ENCODE measurements at regions of chr20 and their contacts with region 1.

Region 1: DNA sequence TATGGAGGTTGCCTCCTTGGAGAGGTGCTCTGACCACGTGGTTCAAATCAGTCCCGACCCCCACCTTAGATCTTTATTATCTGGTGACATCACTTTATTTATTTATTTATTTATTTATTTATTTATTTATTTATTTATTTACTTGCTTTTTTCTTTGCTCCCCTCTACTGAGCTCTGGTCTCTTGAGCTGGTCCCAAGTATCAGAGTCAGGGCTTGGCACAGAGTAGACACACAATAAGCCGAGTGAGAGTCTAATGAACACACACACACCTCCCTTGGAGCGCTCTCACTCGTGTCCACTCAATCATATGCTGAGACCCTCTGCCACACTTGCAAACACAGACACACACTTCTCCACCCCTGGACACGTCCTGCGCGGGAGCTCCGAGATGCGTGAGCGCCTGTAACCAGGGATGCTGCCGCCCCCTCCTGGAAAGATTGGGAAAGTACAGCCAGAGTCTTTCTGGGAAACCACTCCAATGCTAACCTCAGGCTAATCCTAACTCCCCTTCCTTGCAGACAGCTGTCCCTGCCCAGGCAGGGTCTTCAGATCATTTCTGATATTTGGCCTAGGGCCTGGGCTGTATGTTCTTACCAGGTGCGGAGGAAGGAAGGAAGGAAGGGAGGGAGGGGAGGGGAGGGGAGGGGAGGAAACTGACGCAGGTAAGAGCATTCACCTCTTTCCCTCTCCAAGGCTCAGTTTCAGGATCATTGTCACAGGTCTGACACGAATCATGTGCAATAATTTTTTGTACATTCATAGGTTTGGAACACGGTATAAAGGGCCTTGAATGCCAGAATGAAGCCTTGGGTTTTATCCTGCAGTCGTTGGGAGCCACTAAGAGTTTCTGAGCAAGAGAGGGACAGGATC is 70.9 kb downstream of the STK35 start:
- DNase-seq: peak; percentile 72 to 80 (median 73)
- ATAC-seq: peak; percentile 82
- H3K4me3 ChIP-seq: no peak overlapping the region
- H3K27ac ChIP-seq: no peak overlapping the region
- H3K4me1 ChIP-seq: no peaks in the 10 kb centered on the region
- H3K27me3 ChIP-seq: no peaks in the 10 kb centered on the region
- CTCF ChIP-seq: peak; percentile 68 to 89 (median 84)
- POLR2A ChIP-seq: no peak

Region 2: DNA sequence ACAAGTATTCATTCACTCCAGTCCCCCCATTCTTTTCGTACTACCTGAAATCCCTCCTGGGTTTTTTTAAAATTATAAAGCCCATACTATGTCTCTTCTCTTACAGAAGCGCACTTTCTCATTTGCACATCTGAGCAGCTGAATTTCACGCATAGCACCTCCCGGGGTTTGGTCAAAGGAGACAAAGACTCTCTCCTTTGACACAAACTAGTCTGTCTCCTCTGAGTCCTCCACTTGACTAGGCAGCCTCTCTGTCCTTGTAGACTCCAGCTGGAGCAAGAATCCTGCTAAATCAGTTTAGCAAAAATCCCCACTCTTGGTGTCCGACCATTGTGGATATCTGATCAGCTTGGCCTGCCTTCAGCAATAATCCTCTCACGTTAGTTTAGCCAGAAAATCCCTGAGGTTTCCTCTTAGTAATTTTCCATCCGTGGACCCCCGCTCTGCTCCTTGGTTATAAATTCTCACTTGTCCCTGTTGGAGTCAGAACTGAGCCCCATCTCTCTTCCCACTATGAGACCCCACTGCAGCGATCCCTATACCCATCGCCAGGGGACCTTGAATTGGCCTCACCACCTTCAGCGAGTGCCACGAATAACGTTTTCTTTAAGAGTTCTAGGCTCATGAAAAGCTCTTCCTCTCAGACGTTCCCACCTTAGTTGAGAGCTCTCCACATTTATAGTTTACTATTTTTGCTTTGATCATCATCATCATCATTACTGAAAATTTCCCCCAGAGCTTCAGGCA is 207.7 kb before region 1 on chr20:
- intact Hi-C with region 1: loop called (anchors 5 kb)
- DNase-seq: no peak
- ATAC-seq: no peak
- H3K4me3 ChIP-seq: no peak overlapping the region
- H3K27ac ChIP-seq: no peak overlapping the region
- H3K4me1 ChIP-seq: peaks cover 10% of the 10 kb centered on the region
- H3K27me3 ChIP-seq: no peaks in the 10 kb centered on the region
- CTCF ChIP-seq: no peak
- POLR2A ChIP-seq: no peak

Region 3: DNA sequence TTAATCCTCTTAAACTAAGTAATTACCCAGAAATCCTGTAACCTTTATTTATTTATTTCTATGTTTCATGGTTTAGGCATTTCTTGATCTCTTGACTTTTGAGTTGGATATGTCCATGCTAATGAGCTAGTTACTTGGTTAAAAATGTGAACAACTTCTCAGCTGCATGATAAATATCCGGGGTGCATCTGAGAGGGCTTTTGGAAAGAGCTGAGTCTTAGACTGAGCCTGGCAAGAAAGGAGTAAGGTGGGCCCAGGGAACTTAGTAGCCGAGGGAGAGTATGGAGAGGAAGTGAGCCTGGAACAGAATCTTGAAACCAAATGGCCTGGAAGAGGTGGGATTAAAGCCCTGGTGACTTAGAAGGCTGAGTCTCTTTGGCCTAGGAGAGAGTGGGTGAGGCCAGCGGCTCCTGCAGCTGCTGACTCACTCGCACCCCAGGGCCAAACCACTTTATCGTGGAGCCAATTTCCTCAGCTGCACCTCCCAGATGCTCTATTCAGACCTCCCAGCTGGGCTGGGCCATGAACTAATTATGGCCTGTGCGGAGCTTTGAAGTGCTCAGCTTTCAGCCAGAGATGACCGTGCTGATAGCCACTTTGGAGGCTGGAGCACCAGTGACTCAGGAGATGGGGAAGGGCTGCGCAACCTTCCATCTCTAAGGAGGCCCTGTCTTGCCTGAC is 142.4 kb after region 1 on chr20:
- intact Hi-C with region 1: no loop called
- DNase-seq: peak in 2 of 4 donors; percentile 17 to 39
- ATAC-seq: no peak
- H3K4me3 ChIP-seq: no peak overlapping the region
- H3K27ac ChIP-seq: no peak overlapping the region
- H3K4me1 ChIP-seq: no peaks in the 10 kb centered on the region
- H3K27me3 ChIP-seq: no peaks in the 10 kb centered on the region
- CTCF ChIP-seq: no peak
- POLR2A ChIP-seq: no peak

Region 4: GRCh38 chr20:2508631-2509467 is 336.3 kb after region 1 on chr20 and contains the start of gene ZNF343:
- intact Hi-C with region 1: no loop called
- DNase-seq: peak; percentile 79 to 84 (median 82)
- ATAC-seq: peak; percentile 98
- H3K4me3 ChIP-seq: peak within 1 kb of the TSS; percentile 75 to 94
- H3K27ac ChIP-seq: peak within 1 kb of the TSS in 3 of 4 donors; percentile 77 to 84 (median 83)
- H3K4me1 ChIP-seq: peaks cover 21% of the 10 kb centered on the region
- H3K27me3 ChIP-seq: no peaks in the 10 kb centered on the region
- CTCF ChIP-seq: peak in 1 of 7 experiments; percentile 4
- POLR2A ChIP-seq: peak in 2 of 3 donors; percentile 62 to 68
- total RNA-seq, gene ZNF343: 6.7 to 6.9 TPM

Measured in body of pancreas (tissue), 4 donors.